Mammary epithelial cell (primary cell): ENCODE measurements at regions of chr16 and their contacts with region 1.

Region 1: DNA sequence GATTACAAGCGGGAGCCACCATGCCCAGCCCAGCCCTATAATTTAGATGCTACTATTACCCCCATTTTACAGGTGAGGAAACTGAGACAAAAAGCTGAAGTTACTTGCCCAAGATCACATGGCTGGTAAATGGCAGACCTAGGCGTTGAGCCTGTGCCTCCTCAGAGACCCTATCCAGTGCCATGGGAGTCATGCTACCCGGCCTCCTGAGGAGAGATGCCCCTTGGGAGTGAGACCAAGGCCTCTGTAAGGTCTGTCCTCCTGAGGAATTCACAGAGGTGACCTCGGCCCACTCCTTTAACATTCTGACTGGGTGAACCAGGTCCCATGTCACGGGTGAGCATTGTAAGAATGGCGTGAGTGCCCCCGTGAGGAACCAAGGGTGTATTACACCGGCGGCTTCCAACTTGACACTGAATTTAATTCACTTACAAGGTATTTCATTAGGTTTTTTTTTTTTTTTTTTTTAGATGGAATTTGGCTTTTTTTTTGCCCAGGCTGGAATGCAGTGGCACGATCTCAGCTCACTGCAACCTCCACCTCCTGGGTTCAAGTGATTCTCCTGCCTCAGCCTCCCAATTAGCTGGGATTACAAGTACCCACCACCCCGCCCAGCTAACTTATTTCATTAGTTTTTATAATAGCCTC is 95.7 kb downstream of the ABCC6 start:
- DNase-seq: peak; percentile 42
- H3K4me3 ChIP-seq: no peak overlapping the region
- H3K27ac ChIP-seq: no peak overlapping the region
- H3K4me1 ChIP-seq: no peaks in the 10 kb centered on the region
- H3K27me3 ChIP-seq: no peaks in the 10 kb centered on the region
- CTCF ChIP-seq: peak; percentile 77 to 79

Region 2: DNA sequence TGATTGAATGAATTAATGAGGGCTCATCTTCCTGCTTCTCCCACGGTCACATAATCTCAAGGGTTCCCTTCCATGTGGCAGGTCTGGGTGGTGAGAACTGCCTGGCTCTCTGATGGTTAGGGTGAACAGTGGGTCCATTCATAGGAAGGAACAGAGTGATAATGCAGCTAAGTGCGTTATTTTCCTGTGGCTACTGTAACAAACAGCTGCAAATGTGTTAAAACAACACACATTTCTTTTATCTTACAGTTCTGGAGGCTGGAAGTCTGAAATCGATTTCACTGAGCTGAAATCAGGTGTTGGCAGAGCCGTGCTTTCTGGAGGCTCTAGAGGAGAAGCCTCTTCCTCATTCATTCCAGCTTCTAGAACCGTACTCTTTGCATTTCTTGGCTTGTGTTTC is 597.9 kb before region 1 on chr16:
- CTCF ChIA-PET with region 1: no interaction called
- dilution Hi-C with region 1: no loop called
- in situ Hi-C with region 1: no loop called
- intact Hi-C with region 1: no loop called
- DNase-seq: no peak
- H3K4me3 ChIP-seq: no peak overlapping the region
- H3K27ac ChIP-seq: no peak overlapping the region
- H3K4me1 ChIP-seq: no peaks in the 10 kb centered on the region
- H3K27me3 ChIP-seq: no peaks in the 10 kb centered on the region
- CTCF ChIP-seq: no peak

Region 3: GRCh38 chr16:15732416-15732815 is 395.2 kb before region 1 on chr16:
- CTCF ChIA-PET with region 1: no interaction called
- dilution Hi-C with region 1: loop called (anchors 10 kb)
- in situ Hi-C with region 1: no loop called
- intact Hi-C with region 1: no loop called
- DNase-seq: no peak
- H3K4me3 ChIP-seq: no peak overlapping the region
- H3K27ac ChIP-seq: no peak overlapping the region
- H3K4me1 ChIP-seq: no peaks in the 10 kb centered on the region
- H3K27me3 ChIP-seq: no peaks in the 10 kb centered on the region
- CTCF ChIP-seq: no peak

Region 4: GRCh38 chr16:15777533-15778203 is 349.9 kb before region 1 on chr16:
- CTCF ChIA-PET with region 1: no interaction called
- dilution Hi-C with region 1: no loop called
- in situ Hi-C with region 1: loop called in 1 of 2 experiments (anchors 25 kb)
- intact Hi-C with region 1: no loop called
- DNase-seq: peak; percentile 19
- H3K4me3 ChIP-seq: no peak overlapping the region
- H3K27ac ChIP-seq: no peak overlapping the region
- H3K4me1 ChIP-seq: no peaks in the 10 kb centered on the region
- H3K27me3 ChIP-seq: no peaks in the 10 kb centered on the region
- CTCF ChIP-seq: peak; percentile 43 to 61

Region 5: GRCh38 chr16:15874745-15875314 is 252.8 kb before region 1 on chr16:
- CTCF ChIA-PET with region 1: no interaction called
- dilution Hi-C with region 1: no loop called
- in situ Hi-C with region 1: no loop called
- intact Hi-C with region 1: loop called (anchors 1 kb)
- DNase-seq: peak; percentile 56
- H3K4me3 ChIP-seq: no peak overlapping the region
- H3K27ac ChIP-seq: no peak overlapping the region
- H3K4me1 ChIP-seq: peaks cover 10% of the 10 kb centered on the region
- H3K27me3 ChIP-seq: no peaks in the 10 kb centered on the region
- CTCF ChIP-seq: peak; percentile 86 to 90

Region 6: DNA sequence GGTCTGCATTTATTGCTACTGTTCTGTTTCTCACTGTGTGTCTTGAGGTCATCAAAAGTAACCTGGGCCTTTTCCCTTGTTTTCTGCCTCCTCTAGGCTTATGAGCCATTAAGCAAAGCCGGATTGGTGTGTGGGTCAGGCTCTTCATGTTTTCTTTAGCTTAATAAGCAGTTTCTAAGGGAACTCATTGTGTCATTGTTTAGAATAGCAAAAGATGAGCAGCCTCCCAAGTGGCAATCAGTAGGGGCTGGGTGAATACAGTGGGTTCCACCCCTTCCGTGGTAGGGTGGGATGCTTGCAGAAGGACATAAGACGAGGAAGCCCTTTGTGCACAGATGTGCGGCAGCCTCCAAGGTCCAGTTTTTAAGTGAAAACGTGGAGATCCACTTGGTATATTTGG is 143.7 kb before region 1 on chr16:
- CTCF ChIA-PET with region 1: no interaction called
- dilution Hi-C with region 1: no loop called
- in situ Hi-C with region 1: no loop called
- intact Hi-C with region 1: no loop called
- DNase-seq: no peak
- H3K4me3 ChIP-seq: no peak overlapping the region
- H3K27ac ChIP-seq: no peak overlapping the region
- H3K4me1 ChIP-seq: peaks cover 7% of the 10 kb centered on the region
- H3K27me3 ChIP-seq: no peaks in the 10 kb centered on the region
- CTCF ChIP-seq: no peak